Caco-2 (cell line): ENCODE measurements at regions of chr1 and their contacts with region 1.

Region 1: GRCh38 chr1:29368936-29369932 is 132.9 kb downstream of the PTPRU start:
- DNase-seq: peak in 1 of 2 experiments; percentile 8
- H3K4me3 ChIP-seq: no peak overlapping the region
- H3K4me3 Mint-ChIP-seq: no peak overlapping the region
- H3K27ac Mint-ChIP-seq: no peak overlapping the region
- H3K4me1 ChIP-seq: no peaks in the 10 kb centered on the region
- H3K4me1 Mint-ChIP-seq: no peaks in the 10 kb centered on the region
- H3K27me3 ChIP-seq: no peaks in the 10 kb centered on the region
- H3K27me3 Mint-ChIP-seq: peaks cover 24% of the 10 kb centered on the region
- CTCF ChIP-seq: no peak

Region 2: DNA sequence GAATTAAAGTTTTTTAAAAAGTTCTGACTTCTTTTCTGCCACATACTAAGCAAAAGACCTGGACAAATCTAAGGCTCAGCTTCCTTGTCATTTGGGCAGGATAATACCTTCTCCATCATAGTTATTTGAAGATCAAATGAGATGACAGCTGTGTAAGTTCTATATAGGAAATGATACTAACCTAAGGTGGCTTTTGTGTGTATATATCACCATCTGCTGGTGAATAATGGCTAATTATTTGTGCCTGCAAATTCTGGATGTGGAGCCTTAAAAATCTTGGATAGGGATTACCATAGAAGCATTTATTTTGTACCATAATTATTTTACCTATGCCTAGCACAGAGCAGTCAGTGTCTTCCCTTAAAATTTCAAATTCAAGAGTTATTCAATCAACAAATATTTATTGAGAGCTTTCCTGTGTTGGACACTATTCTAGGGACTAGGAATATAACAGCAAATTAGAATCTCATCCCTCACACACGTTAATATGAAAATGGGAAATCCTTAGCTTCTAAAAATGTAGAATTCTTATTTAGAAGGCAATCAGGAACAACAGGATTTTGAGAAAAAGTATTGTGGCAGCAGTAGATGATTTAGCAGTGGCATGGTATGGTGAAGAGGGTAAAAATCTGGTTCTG is 335.3 kb before region 1 on chr1:
- CTCF ChIA-PET with region 1: no interaction called
- POLR2A ChIA-PET with region 1: no interaction called
- intact Hi-C with region 1: no loop called
- DNase-seq: peak in 1 of 2 experiments; percentile 12
- H3K4me3 ChIP-seq: no peak overlapping the region
- H3K4me3 Mint-ChIP-seq: no peak overlapping the region
- H3K27ac Mint-ChIP-seq: no peak overlapping the region
- H3K4me1 ChIP-seq: no peaks in the 10 kb centered on the region
- H3K4me1 Mint-ChIP-seq: no peaks in the 10 kb centered on the region
- H3K27me3 ChIP-seq: no peaks in the 10 kb centered on the region
- H3K27me3 Mint-ChIP-seq: no peaks in the 10 kb centered on the region
- CTCF ChIP-seq: peak; percentile 26 to 58

Region 3: GRCh38 chr1:29356663-29357062 is 12.6 kb before region 1 on chr1:
- CTCF ChIA-PET with region 1: no interaction called
- POLR2A ChIA-PET with region 1: no interaction called
- intact Hi-C with region 1: loop called (anchors 1 kb)
- DNase-seq: no peak
- H3K4me3 ChIP-seq: no peak overlapping the region
- H3K4me3 Mint-ChIP-seq: no peak overlapping the region
- H3K27ac Mint-ChIP-seq: no peak overlapping the region
- H3K4me1 ChIP-seq: no peaks in the 10 kb centered on the region
- H3K4me1 Mint-ChIP-seq: no peaks in the 10 kb centered on the region
- H3K27me3 ChIP-seq: no peaks in the 10 kb centered on the region
- H3K27me3 Mint-ChIP-seq: peaks cover 10% of the 10 kb centered on the region
- CTCF ChIP-seq: no peak